Gastrocnemius medialis (tissue), 4 donors: ENCODE measurements at regions of chr2 and their contacts with region 1.

Region 1: DNA sequence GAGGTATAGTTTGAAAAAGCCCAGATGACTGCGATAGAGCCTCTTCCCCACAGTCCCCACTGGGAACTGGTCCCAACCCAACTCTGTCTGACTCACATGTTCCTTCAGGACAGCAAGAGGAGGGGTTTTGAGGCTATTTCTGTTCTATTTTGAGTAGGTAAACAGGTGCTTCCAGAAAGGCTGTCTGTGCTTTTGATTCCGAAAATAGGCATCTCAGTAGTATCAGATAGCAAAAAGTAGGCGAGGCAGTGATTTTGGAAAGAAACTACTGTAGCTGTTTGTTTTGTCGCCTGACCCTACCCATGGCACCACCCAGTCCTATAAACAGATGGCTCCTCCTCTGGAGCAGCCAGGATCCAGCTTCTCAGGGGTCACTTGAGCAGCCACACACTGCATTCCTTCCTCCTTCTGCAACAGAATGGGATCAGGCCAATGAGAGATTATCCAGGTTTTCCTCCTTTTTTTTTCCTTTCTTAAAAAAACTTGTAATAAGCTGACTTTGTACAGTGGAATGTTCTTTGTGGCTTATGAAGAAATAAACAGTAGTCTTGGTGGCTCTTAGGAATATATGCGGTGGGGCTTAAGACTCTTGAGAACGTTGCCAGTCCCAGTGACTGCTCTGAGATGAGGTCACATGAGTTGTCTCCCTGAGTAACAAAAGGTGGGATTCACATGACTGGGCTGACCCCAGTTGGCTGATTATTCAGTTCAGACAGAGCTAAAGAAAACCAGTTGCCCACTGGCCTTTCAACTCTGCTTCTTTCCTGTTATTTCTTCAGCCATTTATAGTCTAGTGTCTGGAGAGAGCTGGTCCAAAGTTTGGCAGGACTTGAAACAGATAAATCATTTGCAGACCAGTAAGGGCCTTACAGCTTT is 98.6 kb downstream of the KCNS3 start:
- DNase-seq: peak; percentile 83 to 90
- ATAC-seq: peak; percentile 93 to 95
- H3K4me3 ChIP-seq: peak overlapping the region; percentile 3 to 33 (median 32)
- H3K27ac ChIP-seq: peak overlapping the region; percentile 85 to 97 (median 91)
- H3K4me1 ChIP-seq: peaks cover 24 to 38% of the 10 kb centered on the region in 2 donors
- H3K27me3 ChIP-seq: no peaks in the 10 kb centered on the region
- CTCF ChIP-seq: no peak
- POLR2A ChIP-seq: peak; percentile 34 to 80

Region 2: GRCh38 chr2:17835516-17835915 is 141.6 kb before region 1 on chr2:
- in situ Hi-C with region 1: no loop called
- intact Hi-C with region 1: no loop called
- DNase-seq: no peak
- ATAC-seq: no peak
- H3K4me3 ChIP-seq: no peak overlapping the region
- H3K27ac ChIP-seq: no peak overlapping the region
- H3K4me1 ChIP-seq: no peaks in the 10 kb centered on the region
- H3K27me3 ChIP-seq: no peaks in the 10 kb centered on the region
- CTCF ChIP-seq: no peak
- POLR2A ChIP-seq: no peak

Region 3: DNA sequence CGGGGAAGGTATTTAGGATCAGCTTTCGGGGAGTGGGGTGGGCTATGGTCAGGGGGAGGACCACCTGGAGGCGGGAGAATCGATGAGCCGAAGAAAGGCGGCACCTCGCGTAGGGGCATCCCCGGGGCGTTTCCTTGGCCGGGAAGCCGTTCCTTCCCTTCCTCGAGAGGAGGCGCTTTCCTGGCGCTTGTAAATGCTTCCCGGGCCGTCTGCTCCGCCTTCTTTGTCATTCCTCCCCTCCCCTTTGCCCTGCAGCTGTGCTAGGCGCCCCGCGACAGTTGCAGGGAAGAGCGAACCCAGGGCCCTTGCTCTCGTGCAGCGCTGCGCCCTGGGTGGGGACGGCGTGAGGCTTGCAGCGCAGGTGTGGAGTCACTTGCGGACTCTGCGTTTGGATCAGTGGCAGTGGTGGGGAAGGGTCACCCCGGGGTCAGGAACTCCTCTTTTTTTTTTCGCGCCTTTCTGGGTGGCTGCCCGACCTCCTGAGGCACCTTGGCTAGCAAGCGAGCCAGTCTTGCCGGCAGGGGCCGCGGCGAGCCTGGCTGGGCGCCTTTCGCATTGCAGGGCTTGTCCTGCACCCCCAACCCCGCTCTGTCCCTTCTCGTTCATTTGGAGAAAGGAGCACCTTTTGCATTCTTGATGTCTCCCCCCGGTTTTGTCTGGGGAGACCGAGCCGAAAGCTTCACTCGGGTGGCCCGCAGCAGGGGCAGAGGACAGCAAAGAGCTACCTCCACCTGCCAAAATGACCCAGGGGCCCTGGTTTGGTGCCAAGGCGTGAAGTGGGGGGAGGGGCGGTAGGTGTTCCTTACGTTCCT is 97.8 kb before region 1 on chr2:
- in situ Hi-C with region 1: loop called in 2 of 4 experiments (anchors 5 to 10 kb)
- intact Hi-C with region 1: loop called (anchors 1 kb)
- DNase-seq: peak; percentile 73 to 79
- ATAC-seq: peak; percentile 82 to 83
- H3K4me3 ChIP-seq: peak overlapping the region; percentile 82 to 98 (median 94)
- H3K27ac ChIP-seq: peak overlapping the region; percentile 83 to 98 (median 92)
- H3K4me1 ChIP-seq: peaks cover 20 to 30% of the 10 kb centered on the region in 2 donors
- H3K27me3 ChIP-seq: no peaks in the 10 kb centered on the region
- CTCF ChIP-seq: peak; percentile 7 to 58 (median 36)
- POLR2A ChIP-seq: no peak

Region 4: GRCh38 chr2:17912266-17912691 is 64.8 kb before region 1 on chr2:
- in situ Hi-C with region 1: no loop called
- intact Hi-C with region 1: loop called (anchors 10 kb)
- DNase-seq: peak; percentile 12 to 32
- ATAC-seq: peak; percentile 62 to 81
- H3K4me3 ChIP-seq: peak overlapping the region; percentile 11 to 42 (median 25)
- H3K27ac ChIP-seq: peak overlapping the region; percentile 27 to 68 (median 48)
- H3K4me1 ChIP-seq: peaks cover 42 to 56% of the 10 kb centered on the region in 2 donors
- H3K27me3 ChIP-seq: no peaks in the 10 kb centered on the region
- CTCF ChIP-seq: no peak
- POLR2A ChIP-seq: no peak

Region 5: DNA sequence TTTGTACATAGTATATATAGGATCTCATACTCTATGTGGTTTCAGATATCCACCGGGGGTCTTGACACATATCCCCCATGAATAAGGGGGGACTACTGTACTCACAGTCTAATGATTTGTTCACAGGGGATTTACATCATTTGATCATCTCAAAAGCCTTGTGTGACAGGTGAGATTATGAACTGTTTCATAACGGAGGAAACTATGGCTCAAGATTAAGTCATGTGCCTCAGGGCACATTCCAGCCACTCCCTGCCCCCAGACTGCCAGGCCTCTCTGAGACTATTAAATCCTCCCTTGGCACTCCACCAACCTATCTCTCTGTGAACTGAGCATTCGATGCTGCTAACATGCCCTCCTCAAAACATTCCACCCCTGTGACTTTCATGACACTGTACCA is 70.7 kb after region 1 on chr2:
- in situ Hi-C with region 1: no loop called
- intact Hi-C with region 1: loop called (anchors 2 kb)
- DNase-seq: peak; percentile 42 to 72
- ATAC-seq: peak; percentile 88 to 90
- H3K4me3 ChIP-seq: no peak overlapping the region
- H3K27ac ChIP-seq: peak overlapping the region; percentile 46 to 77 (median 62)
- H3K4me1 ChIP-seq: peaks cover 18 to 24% of the 10 kb centered on the region in 2 donors
- H3K27me3 ChIP-seq: no peaks in the 10 kb centered on the region
- CTCF ChIP-seq: no peak
- POLR2A ChIP-seq: no peak

Region 6: GRCh38 chr2:18149645-18150246 is 172.6 kb after region 1 on chr2:
- in situ Hi-C with region 1: no loop called
- intact Hi-C with region 1: loop called (anchors 5 kb)
- DNase-seq: no peak
- ATAC-seq: peak; percentile 53 to 70
- H3K4me3 ChIP-seq: no peak overlapping the region
- H3K27ac ChIP-seq: no peak overlapping the region
- H3K4me1 ChIP-seq: peaks cover 5 to 15% of the 10 kb centered on the region in 2 donors
- H3K27me3 ChIP-seq: no peaks in the 10 kb centered on the region
- CTCF ChIP-seq: peak; percentile 44 to 80 (median 62)
- POLR2A ChIP-seq: no peak

Region 7: GRCh38 chr2:18171191-18172139 is 194.4 kb after region 1 on chr2:
- in situ Hi-C with region 1: no loop called
- intact Hi-C with region 1: no loop called
- DNase-seq: no peak
- ATAC-seq: no peak
- H3K4me3 ChIP-seq: no peak overlapping the region
- H3K27ac ChIP-seq: no peak overlapping the region
- H3K4me1 ChIP-seq: peaks cover 0 to 11% of the 10 kb centered on the region in 2 donors
- H3K27me3 ChIP-seq: no peaks in the 10 kb centered on the region
- CTCF ChIP-seq: no peak
- POLR2A ChIP-seq: no peak